OCI-LY7 (cell line): ENCODE measurements at regions of chr10 and their contacts with region 1.

Region 1: DNA sequence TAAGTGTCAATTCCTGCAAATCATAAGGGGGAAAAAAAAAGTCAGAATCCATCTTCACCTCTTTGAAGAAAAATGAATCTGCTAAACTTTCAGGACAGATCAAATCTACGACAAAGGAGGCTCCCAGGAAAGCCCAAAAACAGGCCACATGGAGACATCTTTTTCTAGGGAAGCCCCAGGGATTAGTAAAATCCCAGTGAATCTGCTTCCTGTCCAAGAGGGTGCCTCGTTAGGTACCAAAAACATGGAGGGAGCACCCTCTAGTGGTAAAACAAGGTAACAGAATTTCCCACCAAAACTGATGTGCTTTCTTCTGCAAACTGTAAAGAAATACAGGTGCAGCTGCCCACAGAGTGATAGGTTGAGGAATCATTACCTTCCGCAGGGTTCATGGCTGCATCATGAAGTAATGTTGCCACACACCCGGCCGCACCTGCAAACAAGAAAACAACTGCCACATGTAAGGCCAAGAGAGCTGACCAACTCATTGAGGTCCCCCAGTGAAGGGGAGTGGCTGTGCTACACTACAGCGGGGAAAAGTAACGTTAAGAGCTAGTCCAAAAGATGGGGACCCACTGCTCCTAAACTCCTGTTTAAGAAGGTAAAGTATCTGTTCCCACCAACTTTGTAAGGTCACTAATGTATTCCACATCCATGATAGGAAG is 7.9 kb downstream of the SLC25A28 start:
- DNase-seq: peak; percentile 66
- H3K4me3 ChIP-seq: no peak overlapping the region
- H3K27ac ChIP-seq: no peak overlapping the region
- H3K4me1 ChIP-seq: no peaks in the 10 kb centered on the region
- CTCF ChIP-seq: peak; percentile 95

Region 2: GRCh38 chr10:99430451-99431189 is 181.7 kb before region 1 on chr10 and contains the start of gene GOT1:
- CTCF ChIA-PET with region 1: interaction called, 6 read pairs
- POLR2A ChIA-PET with region 1: interaction called, 3 read pairs
- intact Hi-C with region 1: loop called (anchors 2 kb)
- DNase-seq: peak; percentile 98
- H3K4me3 ChIP-seq: peak within 1 kb of the TSS; percentile 96
- H3K27ac ChIP-seq: peak within 1 kb of the TSS; percentile 61
- H3K4me1 ChIP-seq: peaks cover 14% of the 10 kb centered on the region
- CTCF ChIP-seq: no peak
- total RNA-seq, gene GOT1: 24.5 and 26.4 TPM in 2 replicates